ENCODE measurements at regions of chr11 and their contacts with region 1.

Region 1: DNA sequence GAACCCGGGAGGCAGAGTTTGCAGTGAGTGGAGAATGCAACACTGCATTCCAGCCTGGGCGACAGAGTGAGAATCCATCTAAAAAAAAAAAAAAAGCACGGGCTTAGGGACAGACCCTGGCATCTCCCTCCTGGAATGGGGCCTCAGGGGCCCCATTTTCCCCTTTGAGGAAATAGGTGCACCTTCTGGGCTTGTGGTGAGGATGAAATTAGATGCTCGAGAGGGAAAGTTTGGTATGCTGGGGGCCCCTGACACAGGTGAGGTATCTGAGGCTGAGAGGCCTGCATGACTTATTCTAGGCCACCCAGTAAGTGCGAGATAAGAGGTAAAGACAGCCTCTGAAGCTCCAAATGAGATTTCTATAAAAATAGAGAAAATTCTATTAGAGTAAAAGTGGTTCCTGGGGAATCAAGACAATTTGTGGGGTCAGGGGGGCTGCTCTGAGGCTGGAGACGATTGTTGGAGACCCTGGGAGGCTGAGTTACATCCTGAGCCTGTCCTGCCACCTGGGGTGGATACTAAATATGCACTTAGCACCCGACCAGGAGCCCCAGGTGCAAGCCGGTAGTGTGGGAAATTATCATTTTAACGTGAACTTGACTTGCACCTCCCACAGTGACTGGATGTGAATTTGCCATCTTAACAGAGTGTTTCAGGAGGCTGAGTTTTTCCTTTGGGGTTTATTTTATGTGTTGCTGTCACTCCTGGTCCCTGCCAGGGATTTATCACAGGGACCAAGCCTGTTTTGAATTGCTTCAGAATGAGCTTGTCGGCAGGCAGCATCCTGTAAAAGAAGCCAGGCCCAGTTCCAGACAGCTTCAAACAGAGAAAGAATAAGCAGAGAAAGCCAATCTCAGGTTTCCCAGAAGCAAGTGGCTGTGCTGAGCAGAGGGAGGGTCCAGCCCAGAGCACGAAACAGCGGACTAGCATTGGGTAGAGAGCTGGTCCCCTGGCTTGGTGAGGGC is 48.4 kb upstream of the TSKU start:
- DNase-seq: no peak
- ATAC-seq: no peak
- H3K4me3 Mint-ChIP-seq: no peak overlapping the region
- H3K27ac Mint-ChIP-seq: no peak overlapping the region
- H3K4me1 Mint-ChIP-seq: no peaks in the 10 kb centered on the region
- H3K27me3 Mint-ChIP-seq: no peaks in the 10 kb centered on the region

Region 2: GRCh38 chr11:76708946-76709678 is 25.6 kb before region 1 on chr11:
- CTCF ChIA-PET with region 1: no interaction called
- POLR2A ChIA-PET with region 1: no interaction called
- intact Hi-C with region 1: no loop called
- DNase-seq: no peak
- ATAC-seq: no peak
- H3K4me3 Mint-ChIP-seq: no peak overlapping the region
- H3K27ac Mint-ChIP-seq: no peak overlapping the region
- H3K4me1 Mint-ChIP-seq: no peaks in the 10 kb centered on the region
- H3K27me3 Mint-ChIP-seq: peaks cover 3% of the 10 kb centered on the region

Region 3: GRCh38 chr11:76721755-76722677 is 12.7 kb before region 1 on chr11:
- CTCF ChIA-PET with region 1: interaction called, 12 read pairs
- POLR2A ChIA-PET with region 1: no interaction called
- intact Hi-C with region 1: no loop called
- DNase-seq: peak; percentile 88
- ATAC-seq: peak; percentile 99
- H3K4me3 Mint-ChIP-seq: no peak overlapping the region
- H3K27ac Mint-ChIP-seq: no peak overlapping the region
- H3K4me1 Mint-ChIP-seq: peaks cover 6% of the 10 kb centered on the region
- H3K27me3 Mint-ChIP-seq: peaks cover 16% of the 10 kb centered on the region

Region 4: GRCh38 chr11:76747153-76747914 is 12.6 kb after region 1 on chr11:
- CTCF ChIA-PET with region 1: interaction called, 7 read pairs
- POLR2A ChIA-PET with region 1: interaction called, 14 read pairs
- intact Hi-C with region 1: no loop called
- DNase-seq: no peak
- ATAC-seq: peak; percentile 60
- H3K4me3 Mint-ChIP-seq: no peak overlapping the region
- H3K27ac Mint-ChIP-seq: no peak overlapping the region
- H3K4me1 Mint-ChIP-seq: no peaks in the 10 kb centered on the region
- H3K27me3 Mint-ChIP-seq: peaks cover 6% of the 10 kb centered on the region

Measured in activated CD4-positive, alpha-beta T cell treated with anti-CD3 and anti-CD28 coated beads for 36 hours (primary cell).